Mammary epithelial cell (primary cell): ENCODE measurements at regions of chr14 and their contacts with region 1.

Region 1: DNA sequence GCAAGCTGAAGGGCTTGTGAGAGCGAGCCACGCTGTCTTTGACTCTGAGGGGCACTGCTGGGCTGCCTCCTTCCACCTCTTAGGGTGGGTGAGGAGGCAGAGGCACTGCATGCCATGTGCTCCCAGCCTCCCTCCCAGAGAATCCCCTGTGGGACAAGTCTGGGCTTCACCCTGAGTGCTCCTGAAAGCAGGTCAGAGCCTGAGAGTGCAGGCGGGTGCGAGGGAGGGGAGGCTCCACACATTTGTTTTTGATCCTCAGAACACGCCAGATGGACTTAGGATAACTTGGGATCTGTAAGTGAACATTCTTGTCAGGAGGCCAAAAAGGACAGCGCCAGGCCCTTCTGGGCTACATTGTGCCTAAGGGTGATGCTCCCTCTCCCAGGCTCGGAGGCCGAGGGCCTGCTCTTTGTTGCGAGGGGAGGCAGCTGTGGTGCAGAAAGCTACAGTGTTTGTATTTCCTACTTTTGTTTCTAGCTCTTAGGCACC is 155.4 kb downstream of the TMX1 start:
- DNase-seq: peak; percentile 95
- H3K4me3 ChIP-seq: peak overlapping the region in 1 of 3 experiments; percentile 12
- H3K27ac ChIP-seq: peak overlapping the region; percentile 99
- H3K4me1 ChIP-seq: peaks cover 60% of the 10 kb centered on the region
- H3K27me3 ChIP-seq: no peaks in the 10 kb centered on the region
- CTCF ChIP-seq: peak in 1 of 2 donors; percentile 21

Region 2: GRCh38 chr14:51283402-51284085 is 111.9 kb before region 1 on chr14:
- CTCF ChIA-PET with region 1: no interaction called
- dilution Hi-C with region 1: no loop called
- in situ Hi-C with region 1: no loop called
- intact Hi-C with region 1: loop called (anchors 1 kb)
- DNase-seq: peak; percentile 78
- H3K4me3 ChIP-seq: no peak overlapping the region
- H3K27ac ChIP-seq: no peak overlapping the region
- H3K4me1 ChIP-seq: peaks cover 9% of the 10 kb centered on the region
- H3K27me3 ChIP-seq: no peaks in the 10 kb centered on the region
- CTCF ChIP-seq: peak; percentile 67 to 84

Region 3: GRCh38 chr14:51333901-51334521 is 61.4 kb before region 1 on chr14:
- CTCF ChIA-PET with region 1: no interaction called
- dilution Hi-C with region 1: no loop called
- in situ Hi-C with region 1: no loop called
- intact Hi-C with region 1: loop called (anchors 1 kb)
- DNase-seq: peak; percentile 83
- H3K4me3 ChIP-seq: no peak overlapping the region
- H3K27ac ChIP-seq: peak overlapping the region; percentile 92
- H3K4me1 ChIP-seq: peaks cover 54% of the 10 kb centered on the region
- H3K27me3 ChIP-seq: no peaks in the 10 kb centered on the region
- CTCF ChIP-seq: no peak

Region 4: DNA sequence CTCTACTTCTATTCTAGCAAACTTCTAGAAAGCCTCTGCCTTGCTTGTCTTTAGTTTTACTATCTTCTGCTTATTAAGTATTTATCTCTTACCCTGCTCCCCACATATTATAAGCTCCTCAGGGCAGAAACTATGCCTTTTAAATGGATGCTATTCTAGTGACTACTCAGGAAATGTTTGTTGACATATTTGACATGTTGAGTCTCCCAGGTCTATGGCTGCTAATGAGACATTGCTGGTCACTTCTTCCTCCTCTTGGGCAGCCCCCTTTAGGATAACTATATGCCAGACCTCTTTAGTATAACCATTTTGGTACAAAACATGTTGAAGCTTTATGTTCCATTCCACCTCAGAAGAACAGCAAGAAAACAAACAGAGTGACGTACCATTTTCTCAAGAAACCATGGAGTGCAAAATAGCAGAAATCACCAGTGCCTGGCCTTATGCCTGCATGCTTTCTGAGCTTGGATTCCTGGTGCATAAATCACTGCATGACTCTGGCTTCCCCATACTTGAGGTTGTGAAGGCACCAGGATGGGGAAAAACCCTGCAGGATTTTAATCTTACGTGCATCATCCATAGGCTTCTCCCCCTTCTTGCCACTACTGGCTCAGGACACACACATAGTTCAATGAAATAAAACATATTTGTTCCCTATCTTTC is 47.2 kb after region 1 on chr14:
- CTCF ChIA-PET with region 1: no interaction called
- dilution Hi-C with region 1: no loop called
- in situ Hi-C with region 1: no loop called
- intact Hi-C with region 1: loop called (anchors 1 kb)
- DNase-seq: peak; percentile 94
- H3K4me3 ChIP-seq: peak overlapping the region in 1 of 3 experiments; percentile 1
- H3K27ac ChIP-seq: peak overlapping the region; percentile 89
- H3K4me1 ChIP-seq: peaks cover 41% of the 10 kb centered on the region
- H3K27me3 ChIP-seq: no peaks in the 10 kb centered on the region
- CTCF ChIP-seq: no peak

Region 5: GRCh38 chr14:51534625-51535024 is 139.2 kb after region 1 on chr14:
- CTCF ChIA-PET with region 1: interaction called, 3 read pairs
- dilution Hi-C with region 1: no loop called
- in situ Hi-C with region 1: no loop called
- intact Hi-C with region 1: loop called (anchors 1 kb)
- DNase-seq: peak; percentile 89
- H3K4me3 ChIP-seq: no peak overlapping the region
- H3K27ac ChIP-seq: peak overlapping the region; percentile 96
- H3K4me1 ChIP-seq: peaks cover 42% of the 10 kb centered on the region
- H3K27me3 ChIP-seq: no peaks in the 10 kb centered on the region
- CTCF ChIP-seq: no peak

Region 6: DNA sequence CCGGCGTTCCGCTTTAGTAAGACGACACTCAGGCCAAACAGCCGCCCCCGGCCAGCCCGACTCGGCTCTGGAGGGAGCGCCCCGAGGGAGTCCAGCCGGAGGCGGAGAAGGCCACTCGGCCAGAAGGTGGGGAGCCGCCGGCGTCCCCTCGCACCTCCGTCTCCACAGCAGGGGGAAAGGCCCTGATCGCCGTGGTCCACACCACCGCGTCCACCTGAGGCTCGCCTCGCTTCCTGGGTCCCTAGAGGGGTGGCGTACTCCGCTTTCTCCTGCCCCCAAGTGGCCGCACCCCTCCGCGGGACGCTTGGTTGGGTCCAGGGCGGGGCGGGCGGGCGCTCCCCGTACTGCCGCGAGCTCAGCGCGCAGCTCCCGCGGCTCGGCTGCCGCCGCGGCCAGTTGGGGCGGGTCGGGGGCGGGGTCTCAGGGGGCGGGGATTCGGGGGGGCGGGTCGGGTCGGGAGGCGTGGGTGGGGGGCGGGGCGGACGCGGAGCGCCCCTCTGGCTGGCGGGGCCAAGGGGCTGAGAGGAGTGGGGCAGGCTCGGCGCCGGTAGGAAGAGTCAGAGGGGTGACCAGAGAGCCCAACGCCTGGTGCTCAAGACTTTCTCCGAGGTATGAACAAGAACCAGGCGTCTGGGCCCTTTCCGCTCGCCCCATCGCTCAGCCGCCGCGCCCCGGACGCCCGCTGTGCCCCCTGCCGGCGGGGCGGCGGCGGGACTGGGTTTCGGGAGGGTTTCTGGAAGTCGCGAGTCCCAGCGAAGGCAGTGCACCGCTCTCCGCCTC is 256.2 kb after region 1 on chr14 and contains the start of gene FRMD6:
- CTCF ChIA-PET with region 1: no interaction called
- dilution Hi-C with region 1: no loop called
- in situ Hi-C with region 1: no loop called
- intact Hi-C with region 1: loop called (anchors 1 kb)
- DNase-seq: peak; percentile 88
- H3K4me3 ChIP-seq: peak within 1 kb of the TSS; percentile 89 to 94 (median 91)
- H3K27ac ChIP-seq: peak within 1 kb of the TSS; percentile 85
- H3K4me1 ChIP-seq: peaks cover 16% of the 10 kb centered on the region
- H3K27me3 ChIP-seq: no peaks in the 10 kb centered on the region
- CTCF ChIP-seq: peak; percentile 51 to 83
- total RNA-seq, gene FRMD6: 191 to 302 TPM